Cardiac septum (tissue), 1 donor: ENCODE measurements at regions of chr1 and their contacts with region 1.

Region 1: DNA sequence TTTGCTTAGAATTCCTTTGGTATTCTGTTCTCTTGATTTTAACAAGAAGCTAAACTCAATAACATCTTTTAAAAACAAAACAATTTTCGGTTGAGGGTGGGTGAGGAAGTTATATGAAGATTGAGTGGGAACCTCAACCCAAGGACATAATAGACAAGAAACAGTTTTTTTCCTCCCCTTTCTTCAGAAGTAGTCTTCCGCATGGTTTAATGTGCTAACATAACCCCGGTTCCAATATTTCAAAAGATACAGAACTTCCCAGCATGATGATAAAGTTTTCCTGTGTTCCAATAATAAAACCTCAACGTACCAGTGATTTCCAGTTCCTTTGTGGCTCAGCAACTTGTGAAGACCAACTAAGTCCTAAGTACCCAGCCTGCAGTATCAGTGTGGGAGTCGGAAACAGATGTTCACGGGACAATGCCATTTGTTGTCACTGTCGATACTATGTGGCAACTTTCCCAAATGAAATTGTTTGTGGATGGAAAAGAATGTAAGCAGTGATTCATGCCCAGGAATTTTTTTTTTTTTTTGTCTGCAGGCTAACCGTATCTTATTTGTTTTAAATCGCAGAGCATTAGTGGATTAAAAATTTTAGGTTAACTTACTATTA is 48.5 kb downstream of the NR5A2 start:
- DNase-seq: no peak

Region 2: DNA sequence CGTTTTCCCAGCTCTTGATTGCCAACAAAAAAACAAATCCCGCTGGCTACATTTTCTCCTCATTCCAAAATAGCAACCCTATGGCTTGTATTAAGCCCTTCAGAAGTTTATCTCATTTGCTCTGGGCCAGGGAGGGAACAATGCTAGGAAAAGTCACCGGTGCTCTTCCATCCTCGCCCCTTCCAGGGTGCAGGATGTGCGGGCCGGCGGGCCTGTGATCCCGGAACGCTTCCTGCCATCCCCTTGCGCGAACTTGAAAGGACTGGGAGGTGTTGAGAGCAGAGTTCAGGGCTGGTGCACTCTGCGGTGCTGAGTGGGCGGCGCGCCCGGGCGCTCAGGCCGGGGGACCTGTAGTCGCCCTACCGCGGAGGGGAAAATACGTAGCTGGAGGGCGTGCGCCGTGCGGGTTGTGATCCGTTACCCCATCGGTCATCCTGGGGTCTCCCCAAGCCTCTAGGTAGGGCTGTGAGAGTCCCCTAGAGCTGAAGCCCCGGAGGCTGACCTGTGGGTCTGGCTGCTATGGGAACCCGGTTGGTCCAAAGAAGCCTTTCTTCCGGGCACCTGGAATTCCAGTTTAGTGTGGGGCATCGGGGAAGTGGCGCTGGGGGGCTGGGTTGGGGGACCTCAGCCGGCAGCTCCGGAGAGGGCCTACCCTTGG is 35.4 kb before region 1 on chr1:
- intact Hi-C with region 1: loop called (anchors 5 kb)
- DNase-seq: no peak

Region 3: GRCh38 chr1:200242110-200243041 is 166.3 kb after region 1 on chr1:
- intact Hi-C with region 1: loop called (anchors 5 kb)
- DNase-seq: no peak

Region 4: DNA sequence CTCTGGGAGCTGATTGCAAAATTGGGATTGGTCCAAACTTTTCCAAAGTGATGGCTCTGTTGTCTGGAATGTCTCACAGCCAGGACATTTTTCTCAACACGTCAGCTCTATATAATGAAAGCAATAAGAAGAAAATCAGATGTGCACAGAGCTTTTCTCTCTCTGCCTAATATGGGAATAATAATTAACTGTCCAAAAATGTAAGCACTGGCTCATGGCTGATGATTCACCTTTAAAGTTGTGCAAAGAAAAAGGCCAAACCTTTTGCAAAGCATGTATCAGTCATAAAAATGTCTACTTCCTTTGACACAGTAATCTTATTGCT is 303.3 kb after region 1 on chr1:
- intact Hi-C with region 1: no loop called
- DNase-seq: no peak